ENCODE measurements at regions of chr10 and their contacts with region 1.

Region 1: GRCh38 chr10:67788025-67788886 is 49.7 kb downstream of the DNAJC12 start:
- DNase-seq: peak; percentile 92
- H3K4me3 Mint-ChIP-seq: no peak overlapping the region
- H3K27ac Mint-ChIP-seq: peak overlapping the region; percentile 57
- H3K4me1 Mint-ChIP-seq: peaks cover 43% of the 10 kb centered on the region
- H3K27me3 Mint-ChIP-seq: peaks cover 2% of the 10 kb centered on the region

Region 2: DNA sequence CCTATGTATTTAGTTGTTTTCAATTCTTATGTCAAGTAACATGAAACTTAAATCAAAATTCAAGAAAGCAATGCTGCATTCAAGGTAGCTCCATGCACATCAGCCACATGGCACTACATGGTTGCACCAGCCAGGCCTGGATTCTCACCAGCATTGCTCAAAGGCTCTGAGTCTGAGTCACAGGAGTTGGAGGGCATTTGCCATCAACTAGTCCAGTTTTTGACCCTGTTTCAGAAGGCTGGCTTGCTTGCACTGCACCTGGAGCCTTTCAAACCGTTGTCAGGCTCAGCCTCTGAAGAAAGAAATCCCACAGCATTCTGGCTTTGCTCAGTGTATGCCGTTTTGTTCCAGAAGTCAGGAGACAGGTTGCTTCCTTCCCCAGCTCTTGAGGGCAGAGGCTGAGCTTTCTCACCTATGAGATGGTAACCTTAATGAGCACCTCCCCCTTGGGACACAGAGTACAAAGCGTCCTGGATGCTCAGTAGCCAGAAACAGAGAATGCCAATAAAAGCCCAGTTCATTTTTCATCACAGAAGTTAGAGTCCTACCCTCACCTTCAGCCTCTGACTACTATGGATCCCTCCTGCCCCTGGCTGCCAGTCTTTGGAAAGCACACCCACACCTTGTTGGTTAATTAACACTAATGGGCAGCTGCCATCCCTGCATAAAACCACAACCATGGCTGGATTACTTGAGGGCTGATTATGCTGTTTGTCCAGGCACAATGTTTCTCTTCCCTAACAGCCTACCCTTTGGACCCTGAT is 1150.8 kb before region 1 on chr10:
- CTCF ChIA-PET with region 1: no interaction called
- intact Hi-C with region 1: no loop called
- DNase-seq: no peak
- H3K4me3 Mint-ChIP-seq: no peak overlapping the region
- H3K27ac Mint-ChIP-seq: no peak overlapping the region
- H3K4me1 Mint-ChIP-seq: no peaks in the 10 kb centered on the region
- H3K27me3 Mint-ChIP-seq: no peaks in the 10 kb centered on the region

Region 3: GRCh38 chr10:67697724-67698131 is 90.5 kb before region 1 on chr10:
- CTCF ChIA-PET with region 1: interaction called, 21 read pairs
- intact Hi-C with region 1: no loop called
- DNase-seq: peak; percentile 10
- H3K4me3 Mint-ChIP-seq: no peak overlapping the region
- H3K27ac Mint-ChIP-seq: no peak overlapping the region
- H3K4me1 Mint-ChIP-seq: no peaks in the 10 kb centered on the region
- H3K27me3 Mint-ChIP-seq: peaks cover 10% of the 10 kb centered on the region

Region 4: GRCh38 chr10:67803588-67804394 is 15.5 kb after region 1 on chr10:
- CTCF ChIA-PET with region 1: interaction called, 14 read pairs
- intact Hi-C with region 1: loop called (anchors 1 kb)
- DNase-seq: peak; percentile 51
- H3K4me3 Mint-ChIP-seq: no peak overlapping the region
- H3K27ac Mint-ChIP-seq: peak overlapping the region; percentile 87
- H3K4me1 Mint-ChIP-seq: peaks cover 10% of the 10 kb centered on the region
- H3K27me3 Mint-ChIP-seq: no peaks in the 10 kb centered on the region

Region 5: GRCh38 chr10:67849331-67850011 is 61.2 kb after region 1 on chr10:
- CTCF ChIA-PET with region 1: interaction called, 46 read pairs
- intact Hi-C with region 1: loop called (anchors 1 kb)
- DNase-seq: peak; percentile 98
- H3K4me3 Mint-ChIP-seq: peak overlapping the region; percentile 97
- H3K27ac Mint-ChIP-seq: peak overlapping the region; percentile 98
- H3K4me1 Mint-ChIP-seq: peaks cover 8% of the 10 kb centered on the region
- H3K27me3 Mint-ChIP-seq: no peaks in the 10 kb centered on the region

Region 6: DNA sequence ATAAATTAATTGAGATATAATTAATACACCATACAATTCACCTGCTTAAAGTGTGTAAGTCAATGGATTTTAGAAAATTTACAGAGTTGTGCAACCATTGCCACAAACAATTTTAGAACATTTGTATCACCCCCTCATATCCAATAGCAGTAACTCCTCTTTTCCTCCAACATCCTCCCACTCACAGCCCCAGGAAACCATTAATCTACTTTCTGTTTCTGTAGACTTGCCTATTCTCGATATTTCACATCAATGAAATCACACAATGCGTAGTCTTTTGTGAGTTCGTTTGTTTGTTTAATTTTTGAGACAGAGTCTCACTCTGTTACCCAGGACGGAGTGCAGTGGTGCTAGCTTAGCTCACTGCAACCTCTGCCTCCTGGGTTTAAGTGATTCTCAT is 300.5 kb after region 1 on chr10:
- CTCF ChIA-PET with region 1: interaction called, 6 read pairs
- intact Hi-C with region 1: loop called (anchors 5 kb)
- DNase-seq: peak; percentile 22
- H3K4me3 Mint-ChIP-seq: no peak overlapping the region
- H3K27ac Mint-ChIP-seq: no peak overlapping the region
- H3K4me1 Mint-ChIP-seq: peaks cover 9% of the 10 kb centered on the region
- H3K27me3 Mint-ChIP-seq: no peaks in the 10 kb centered on the region

Region 7: DNA sequence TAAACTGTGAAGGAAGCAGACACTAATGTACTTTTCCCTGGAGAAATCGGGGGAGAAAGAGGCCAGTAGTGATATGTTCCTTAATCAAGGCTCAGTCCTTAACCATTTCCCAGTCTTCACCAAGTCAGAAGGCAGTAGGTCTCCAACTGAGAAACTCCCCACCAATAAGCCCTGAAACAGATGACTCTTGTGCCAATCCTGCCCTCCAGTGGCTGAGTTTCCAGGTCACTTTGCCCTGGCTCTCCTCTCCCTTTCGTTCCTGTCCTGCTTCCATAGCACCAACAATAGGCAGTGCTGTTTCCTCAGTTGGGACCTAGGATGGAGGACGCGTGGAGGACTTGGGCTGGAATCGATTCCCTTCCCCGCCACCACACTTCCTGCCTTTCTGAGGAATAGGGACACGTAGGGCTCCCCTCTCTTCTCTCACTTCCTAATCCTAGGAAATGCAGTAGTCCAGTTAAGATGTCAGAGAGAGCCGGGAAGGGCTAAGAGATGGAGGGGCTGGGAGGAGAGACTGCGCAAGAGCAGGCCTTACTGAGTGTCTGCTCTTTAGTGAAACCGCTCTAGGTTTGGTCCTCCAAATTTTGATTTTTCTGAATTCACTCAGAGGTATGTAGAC is 420.3 kb after region 1 on chr10:
- CTCF ChIA-PET with region 1: interaction called, 7 read pairs
- intact Hi-C with region 1: loop called (anchors 1 kb)
- DNase-seq: peak; percentile 63
- H3K4me3 Mint-ChIP-seq: no peak overlapping the region
- H3K27ac Mint-ChIP-seq: no peak overlapping the region
- H3K4me1 Mint-ChIP-seq: no peaks in the 10 kb centered on the region
- H3K27me3 Mint-ChIP-seq: no peaks in the 10 kb centered on the region